ENCODE measurements at regions of chr2 and their contacts with region 1.

Region 1: DNA sequence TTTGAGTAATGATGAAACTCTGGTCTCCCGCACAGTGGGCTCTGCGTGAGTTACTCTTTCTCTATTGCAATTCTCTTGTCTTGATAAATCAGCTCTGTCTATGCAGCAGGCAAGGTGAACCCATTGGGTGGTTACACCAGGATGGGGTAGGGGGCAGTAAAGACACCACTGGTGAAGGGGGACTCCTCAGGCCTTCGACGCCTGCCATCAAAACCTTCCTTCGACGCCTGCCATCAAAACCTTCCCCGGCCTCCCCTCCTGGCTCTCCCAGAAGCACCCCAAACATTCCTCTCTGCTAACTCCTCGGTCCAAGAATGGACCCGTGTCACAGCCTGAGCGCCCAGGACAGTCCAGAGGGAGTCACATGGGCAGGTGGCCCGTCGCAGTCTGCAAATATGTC is 4.8 kb upstream of the STARD7 start:
- DNase-seq: no peak
- ATAC-seq: no peak
- H3K4me3 ChIP-seq: no peak overlapping the region
- H3K4me3 Mint-ChIP-seq: no peak overlapping the region
- H3K27ac ChIP-seq: no peak overlapping the region
- H3K27ac Mint-ChIP-seq: no peak overlapping the region
- H3K4me1 ChIP-seq: peaks cover 15% of the 10 kb centered on the region
- H3K4me1 Mint-ChIP-seq: peaks cover 13% of the 10 kb centered on the region
- H3K27me3 ChIP-seq: no peaks in the 10 kb centered on the region
- H3K27me3 Mint-ChIP-seq: no peaks in the 10 kb centered on the region
- CTCF ChIP-seq: no peak

Region 2: GRCh38 chr2:96195410-96196066 is 17.8 kb before region 1 on chr2:
- CTCF ChIA-PET with region 1: interaction called, 3 read pairs
- POLR2A ChIA-PET with region 1: interaction called, 4 read pairs
- intact Hi-C with region 1: loop called in 1 of 2 experiments (anchors 1 kb)
- DNase-seq: no peak
- ATAC-seq: no peak
- H3K4me3 ChIP-seq: no peak overlapping the region
- H3K4me3 Mint-ChIP-seq: no peak overlapping the region
- H3K27ac ChIP-seq: no peak overlapping the region
- H3K27ac Mint-ChIP-seq: peak overlapping the region; percentile 51
- H3K4me1 ChIP-seq: peaks cover 3% of the 10 kb centered on the region
- H3K4me1 Mint-ChIP-seq: peaks cover 51% of the 10 kb centered on the region
- H3K27me3 ChIP-seq: no peaks in the 10 kb centered on the region
- H3K27me3 Mint-ChIP-seq: no peaks in the 10 kb centered on the region
- CTCF ChIP-seq: no peak

Region 3: DNA sequence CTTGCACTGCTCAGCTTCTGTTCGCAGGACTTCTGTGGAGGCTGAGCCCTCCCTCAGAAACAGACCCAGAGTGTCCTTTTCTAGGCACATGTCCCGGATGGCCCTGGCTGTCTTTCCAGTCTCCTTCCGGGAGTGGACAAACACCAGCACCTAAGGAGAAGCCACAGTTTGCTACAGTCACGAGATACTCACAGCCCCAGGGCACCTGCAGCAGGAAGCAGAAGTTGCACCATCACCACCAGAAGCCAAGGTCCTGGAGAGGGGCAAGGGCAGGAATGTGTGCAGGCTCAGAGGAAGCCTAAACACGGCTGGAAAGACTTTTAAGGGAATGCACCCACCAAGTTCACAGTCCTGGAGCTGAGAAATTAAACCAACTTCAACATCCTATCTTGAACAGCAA is 78.4 kb after region 1 on chr2:
- CTCF ChIA-PET with region 1: no interaction called
- POLR2A ChIA-PET with region 1: no interaction called
- intact Hi-C with region 1: no loop called
- DNase-seq: no peak
- ATAC-seq: no peak
- H3K4me3 ChIP-seq: no peak overlapping the region
- H3K4me3 Mint-ChIP-seq: no peak overlapping the region
- H3K27ac ChIP-seq: no peak overlapping the region
- H3K27ac Mint-ChIP-seq: no peak overlapping the region
- H3K4me1 ChIP-seq: no peaks in the 10 kb centered on the region
- H3K4me1 Mint-ChIP-seq: no peaks in the 10 kb centered on the region
- H3K27me3 ChIP-seq: no peaks in the 10 kb centered on the region
- H3K27me3 Mint-ChIP-seq: no peaks in the 10 kb centered on the region
- CTCF ChIP-seq: no peak